Activated CD8-positive, alpha-beta memory T cell treated with anti-CD3 and anti-CD28 coated beads, Interleukin-2, amount 10 ng/mL, durations not matched to agents 7 days and 5 days (primary cell): ENCODE measurements at regions of chr12 and their contacts with region 1.

Region 1: GRCh38 chr12:92570056-92570753 is 132.6 kb upstream of the PLEKHG7 start:
- DNase-seq: peak; percentile 50
- ATAC-seq: peak; percentile 79
- H3K4me3 Mint-ChIP-seq: no peak overlapping the region
- H3K27ac Mint-ChIP-seq: no peak overlapping the region
- H3K4me1 Mint-ChIP-seq: peaks cover 10% of the 10 kb centered on the region
- H3K27me3 Mint-ChIP-seq: no peaks in the 10 kb centered on the region

Region 2: GRCh38 chr12:92556141-92556540 is 14.1 kb before region 1 on chr12:
- CTCF ChIA-PET with region 1: interaction called, 11 read pairs
- DNase-seq: no peak
- ATAC-seq: peak; percentile 63
- H3K4me3 Mint-ChIP-seq: peak overlapping the region; percentile 39
- H3K27ac Mint-ChIP-seq: peak overlapping the region; percentile 62
- H3K4me1 Mint-ChIP-seq: peaks cover 22% of the 10 kb centered on the region
- H3K27me3 Mint-ChIP-seq: no peaks in the 10 kb centered on the region

Region 3: GRCh38 chr12:92649511-92650227 is 79.5 kb after region 1 on chr12:
- CTCF ChIA-PET with region 1: interaction called, 13 read pairs
- DNase-seq: peak; percentile 70
- ATAC-seq: peak; percentile 77
- H3K4me3 Mint-ChIP-seq: no peak overlapping the region
- H3K27ac Mint-ChIP-seq: no peak overlapping the region
- H3K4me1 Mint-ChIP-seq: peaks cover 8% of the 10 kb centered on the region
- H3K27me3 Mint-ChIP-seq: no peaks in the 10 kb centered on the region